H1 (cell line): ENCODE measurements at regions of chr2 and their contacts with region 1.

Region 1: GRCh38 chr2:20661067-20661980 is 5.6 kb upstream of the GDF7 start:
- DNase-seq: peak; percentile 69 to 84
- H3K4me3 ChIP-seq: no peak overlapping the region
- H3K27ac ChIP-seq: no peak overlapping the region
- H3K4me1 ChIP-seq: peaks cover 3 to 15% (median 8%) of the 10 kb centered on the region in 4 experiments
- H3K27me3 ChIP-seq: peaks cover 39 to 50% (median 48%) of the 10 kb centered on the region in 4 experiments
- CTCF ChIP-seq: peak in 2 of 3 experiments; percentile 92 to 97; a peak in 3 of 4 replicates
- EP300 ChIP-seq: no peak
- POLR2A ChIP-seq: no peak
- RAD21 ChIP-seq: peak; percentile 96 to 97

Region 2: DNA sequence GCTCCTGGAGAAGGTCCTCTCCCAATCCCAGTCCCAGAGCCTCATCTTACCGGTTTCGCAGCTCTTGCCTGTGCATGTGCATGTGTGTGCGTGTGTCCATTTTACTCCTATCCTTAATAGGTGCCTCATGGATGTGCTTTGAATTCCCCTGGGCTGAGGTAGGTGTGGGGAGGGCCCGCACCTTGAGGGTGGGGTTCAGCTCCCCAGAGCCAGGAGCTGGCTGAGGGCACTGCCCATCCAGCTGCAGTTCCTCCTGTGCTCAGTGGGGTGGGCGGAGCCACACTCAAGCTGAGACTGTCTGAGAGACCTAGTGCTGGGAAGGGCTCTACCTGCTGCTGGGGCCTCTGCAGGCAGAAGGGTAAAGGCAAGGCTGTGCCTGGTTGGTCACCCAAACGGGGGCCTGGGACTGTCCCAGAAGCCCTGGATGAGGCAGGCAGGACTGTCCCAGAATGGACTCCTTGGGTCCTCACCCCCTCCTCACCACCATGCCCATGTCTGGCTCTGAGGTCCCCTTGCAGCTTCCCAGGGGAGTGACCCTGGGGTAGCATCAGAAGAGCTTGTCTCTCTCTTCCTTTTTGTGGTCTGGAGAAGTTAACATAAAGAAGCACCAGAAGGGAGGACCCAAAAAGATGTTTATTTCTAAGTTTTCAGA is 14.5 kb after region 1 on chr2:
- CTCF ChIA-PET with region 1: interaction called, 266 read pairs
- POLR2A ChIA-PET with region 1: interaction called, 8 read pairs
- DNase-seq: peak in 1 of 2 experiments; percentile 66
- H3K4me3 ChIP-seq: no peak overlapping the region
- H3K27ac ChIP-seq: no peak overlapping the region
- H3K4me1 ChIP-seq: peaks cover 7 to 32% (median 17%) of the 10 kb centered on the region in 4 experiments
- H3K27me3 ChIP-seq: peaks cover 10 to 42% (median 32%) of the 10 kb centered on the region in 4 experiments
- CTCF ChIP-seq: peak in 1 of 3 experiments; percentile 22; a peak in 2 of 4 replicates
- EP300 ChIP-seq: no peak
- POLR2A ChIP-seq: no peak
- RAD21 ChIP-seq: no peak; a peak in 1 of 4 replicates

Region 3: GRCh38 chr2:20698916-20699613 is 37.7 kb after region 1 on chr2:
- CTCF ChIA-PET with region 1: interaction called, 23 read pairs
- POLR2A ChIA-PET with region 1: no interaction called
- DNase-seq: no peak
- H3K4me3 ChIP-seq: no peak overlapping the region
- H3K27ac ChIP-seq: no peak overlapping the region
- H3K4me1 ChIP-seq: no peaks in the 10 kb centered on the region
- H3K27me3 ChIP-seq: no peaks in the 10 kb centered on the region
- CTCF ChIP-seq: no peak
- EP300 ChIP-seq: no peak
- POLR2A ChIP-seq: no peak
- RAD21 ChIP-seq: no peak

Region 4: DNA sequence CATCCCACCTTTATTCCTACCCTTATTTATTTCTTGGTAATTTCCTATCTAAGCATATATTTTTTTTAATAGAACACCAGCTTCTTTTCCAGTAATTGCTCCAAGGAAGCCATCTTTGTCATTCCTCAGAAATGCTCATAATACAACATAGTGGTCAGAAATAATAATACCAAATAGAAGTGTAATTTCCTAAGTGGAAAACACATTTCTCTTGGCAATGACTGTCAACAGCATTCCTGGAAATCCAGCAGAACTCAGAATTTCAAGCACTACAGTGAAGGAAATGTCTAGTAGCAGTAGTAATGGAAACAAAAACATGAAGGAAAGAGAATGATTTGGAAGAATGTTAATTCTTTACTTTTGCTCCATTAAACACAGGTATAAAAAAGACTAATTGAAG is 62.2 kb after region 1 on chr2:
- CTCF ChIA-PET with region 1: no interaction called
- POLR2A ChIA-PET with region 1: no interaction called
- DNase-seq: no peak
- H3K4me3 ChIP-seq: no peak overlapping the region
- H3K27ac ChIP-seq: no peak overlapping the region
- H3K4me1 ChIP-seq: no peaks in the 10 kb centered on the region
- H3K27me3 ChIP-seq: no peaks in the 10 kb centered on the region
- CTCF ChIP-seq: no peak
- EP300 ChIP-seq: no peak
- POLR2A ChIP-seq: no peak
- RAD21 ChIP-seq: no peak

Region 5: DNA sequence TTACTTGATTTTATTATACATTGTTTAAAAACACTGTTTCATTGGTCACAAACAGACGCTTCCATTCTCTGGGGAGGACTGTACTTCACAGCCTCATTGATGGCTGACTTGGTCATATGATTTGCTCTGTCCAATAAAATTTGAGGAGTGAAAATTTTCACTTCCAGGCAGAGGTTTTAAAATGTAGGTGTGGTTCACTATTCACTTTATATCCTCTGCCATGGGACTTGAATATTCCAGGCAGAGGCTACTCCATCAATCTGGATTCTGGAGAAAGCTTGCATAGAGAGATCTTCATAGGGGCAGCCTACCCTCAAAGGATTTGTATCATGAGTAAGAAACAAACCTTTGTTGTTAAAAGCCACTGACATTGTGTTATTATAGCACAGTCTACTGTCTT is 104.9 kb after region 1 on chr2:
- CTCF ChIA-PET with region 1: interaction called, 17 read pairs
- POLR2A ChIA-PET with region 1: no interaction called
- DNase-seq: no peak
- H3K4me3 ChIP-seq: no peak overlapping the region
- H3K27ac ChIP-seq: no peak overlapping the region
- H3K4me1 ChIP-seq: peaks cover 0 to 2% (median 2%) of the 10 kb centered on the region in 4 experiments; a peak in 3 of 7 replicates
- H3K27me3 ChIP-seq: no peaks in the 10 kb centered on the region
- CTCF ChIP-seq: no peak
- EP300 ChIP-seq: no peak
- POLR2A ChIP-seq: no peak
- RAD21 ChIP-seq: no peak

Region 6: DNA sequence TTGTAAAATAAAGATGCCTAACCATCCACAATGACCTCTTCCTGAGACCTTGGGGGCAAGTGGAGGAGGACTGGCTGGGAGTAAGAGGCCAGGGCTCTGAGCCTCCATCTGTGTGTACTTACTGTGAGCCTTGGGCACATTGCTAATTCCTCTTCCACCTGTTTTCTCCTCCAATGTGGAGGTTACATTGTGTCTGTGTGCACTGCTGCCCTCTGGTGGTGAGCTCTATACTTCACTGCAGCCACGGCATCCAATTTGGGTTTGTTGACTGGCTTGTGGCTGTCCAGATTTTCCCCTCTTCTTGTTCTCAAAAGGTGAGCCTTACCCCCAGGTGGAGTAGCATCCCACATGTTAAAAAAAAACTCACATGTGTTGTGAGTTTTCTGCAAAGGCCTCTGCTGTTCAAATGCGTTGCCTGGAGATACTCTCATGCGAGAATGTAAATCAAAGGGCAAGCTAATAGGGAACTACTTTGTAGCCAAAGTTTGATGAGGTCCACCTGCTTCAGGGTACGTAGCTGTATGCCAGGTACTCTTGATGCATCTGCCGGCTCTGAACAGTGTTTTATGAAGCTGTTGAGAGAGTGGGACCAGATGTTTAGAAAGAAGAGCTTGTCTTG is 301.7 kb after region 1 on chr2:
- CTCF ChIA-PET with region 1: interaction called, 95 read pairs
- POLR2A ChIA-PET with region 1: no interaction called
- DNase-seq: peak; percentile 27 to 90
- H3K4me3 ChIP-seq: no peak overlapping the region
- H3K27ac ChIP-seq: no peak overlapping the region
- H3K4me1 ChIP-seq: no peaks in the 10 kb centered on the region
- H3K27me3 ChIP-seq: no peaks in the 10 kb centered on the region
- CTCF ChIP-seq: peak; percentile 85 to 89 (median 85)
- EP300 ChIP-seq: no peak
- POLR2A ChIP-seq: no peak
- RAD21 ChIP-seq: peak; percentile 88

Region 7: DNA sequence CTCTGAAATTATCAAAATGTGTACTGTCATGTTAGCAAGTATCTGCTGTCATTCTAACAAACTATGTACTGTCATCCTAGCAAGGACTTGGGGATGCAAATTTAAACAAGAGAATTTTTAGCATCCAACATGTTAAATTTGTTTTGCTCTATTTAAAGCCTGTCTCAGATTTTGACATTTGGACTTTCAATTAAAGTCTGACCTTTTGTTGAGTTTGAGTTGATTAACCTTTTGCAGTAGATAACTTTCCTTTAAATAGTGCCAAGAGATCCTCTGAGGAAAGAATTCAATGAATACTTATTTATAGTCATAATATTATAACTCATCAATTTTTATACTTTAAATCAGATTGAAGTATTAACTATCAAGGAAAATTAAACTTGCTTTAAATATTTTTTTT is 542.7 kb after region 1 on chr2:
- CTCF ChIA-PET with region 1: no interaction called
- POLR2A ChIA-PET with region 1: no interaction called
- DNase-seq: no peak
- H3K4me3 ChIP-seq: no peak overlapping the region
- H3K27ac ChIP-seq: no peak overlapping the region
- H3K4me1 ChIP-seq: no peaks in the 10 kb centered on the region; a peak in 1 of 7 replicates
- H3K27me3 ChIP-seq: no peaks in the 10 kb centered on the region
- CTCF ChIP-seq: no peak
- EP300 ChIP-seq: no peak
- POLR2A ChIP-seq: no peak
- RAD21 ChIP-seq: no peak